B cell (primary cell): ENCODE measurements at regions of chr3 and their contacts with region 1.

Region 1: GRCh38 chr3:52056968-52057805 is 816 bp upstream of the DUSP7 start:
- DNase-seq: peak; percentile 99
- ATAC-seq: peak; percentile 85
- H3K4me3 ChIP-seq: peak overlapping the region; percentile 38 to 88 (median 78)
- H3K4me3 Mint-ChIP-seq: peak overlapping the region; percentile 95
- H3K27ac ChIP-seq: peak overlapping the region; percentile 79 to 83
- H3K27ac Mint-ChIP-seq: peak overlapping the region; percentile 94
- H3K4me1 ChIP-seq: peaks cover 43 to 57% of the 10 kb centered on the region in 2 donors
- H3K4me1 Mint-ChIP-seq: peaks cover 53% of the 10 kb centered on the region
- H3K27me3 ChIP-seq: no peaks in the 10 kb centered on the region
- H3K27me3 Mint-ChIP-seq: no peaks in the 10 kb centered on the region
- CTCF ChIP-seq: no peak

Region 2: GRCh38 chr3:51935886-51936755 is 121.1 kb before region 1 on chr3:
- CTCF ChIA-PET with region 1: no interaction called
- POLR2A ChIA-PET with region 1: no interaction called
- intact Hi-C with region 1: no loop called
- DNase-seq: no peak
- ATAC-seq: no peak
- H3K4me3 ChIP-seq: no peak overlapping the region
- H3K4me3 Mint-ChIP-seq: no peak overlapping the region
- H3K27ac ChIP-seq: no peak overlapping the region
- H3K27ac Mint-ChIP-seq: no peak overlapping the region
- H3K4me1 ChIP-seq: peaks cover 7 to 8% of the 10 kb centered on the region in 2 donors
- H3K4me1 Mint-ChIP-seq: peaks cover 19% of the 10 kb centered on the region
- H3K27me3 ChIP-seq: no peaks in the 10 kb centered on the region
- H3K27me3 Mint-ChIP-seq: no peaks in the 10 kb centered on the region
- CTCF ChIP-seq: no peak

Region 3: DNA sequence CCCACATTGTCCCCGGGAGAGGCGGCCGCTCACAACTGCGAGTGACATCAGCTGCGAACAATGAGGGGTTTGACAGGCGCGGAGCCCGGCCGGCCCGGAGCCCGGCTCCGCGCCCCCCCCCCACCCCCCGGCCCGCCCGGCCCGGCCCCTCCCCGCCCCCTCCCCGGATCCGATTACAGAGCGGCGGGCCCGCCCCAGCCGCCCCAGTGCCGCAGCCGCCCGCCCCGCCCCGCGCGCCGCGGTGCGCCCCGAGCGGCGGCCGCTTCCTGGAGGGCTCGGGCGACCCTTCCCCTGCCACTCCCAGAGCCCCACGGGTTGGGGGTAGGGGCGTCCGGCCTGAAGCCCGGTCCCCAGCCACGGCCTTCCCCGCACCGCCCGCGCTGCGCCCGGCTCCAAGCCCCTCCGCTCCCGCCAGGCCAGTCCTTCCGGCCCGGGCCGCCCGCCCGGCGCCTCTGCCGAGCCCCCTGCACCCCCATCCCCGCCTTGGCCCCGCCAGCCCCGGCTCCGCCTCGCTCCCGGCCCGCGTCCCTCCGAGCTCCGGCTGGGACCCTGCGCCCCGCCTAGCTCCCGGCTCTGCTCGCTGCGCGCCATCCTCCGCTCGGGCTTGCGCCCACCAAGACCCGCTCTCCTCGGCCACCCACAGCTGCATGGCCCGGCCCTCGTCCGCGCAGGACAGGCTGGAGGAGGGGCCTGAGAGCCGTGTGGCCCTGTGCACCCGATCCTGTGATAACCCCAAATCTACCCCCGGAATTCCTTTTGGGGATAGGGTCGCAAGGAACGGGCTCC is 89.6 kb before region 1 on chr3 and contains the start of gene PCBP4:
- CTCF ChIA-PET with region 1: no interaction called
- POLR2A ChIA-PET with region 1: no interaction called
- intact Hi-C with region 1: no loop called
- DNase-seq: peak; percentile 54
- ATAC-seq: peak; percentile 72
- H3K4me3 ChIP-seq: peak within 1 kb of the TSS in 4 of 5 experiments; percentile 37 to 74 (median 55)
- H3K4me3 Mint-ChIP-seq: peak within 1 kb of the TSS; percentile 88
- H3K27ac ChIP-seq: peak within 1 kb of the TSS in 1 of 2 donors; percentile 56
- H3K27ac Mint-ChIP-seq: peak within 1 kb of the TSS; percentile 83
- H3K4me1 ChIP-seq: peaks cover 6 to 20% of the 10 kb centered on the region in 2 donors
- H3K4me1 Mint-ChIP-seq: peaks cover 23% of the 10 kb centered on the region
- H3K27me3 ChIP-seq: no peaks in the 10 kb centered on the region
- H3K27me3 Mint-ChIP-seq: no peaks in the 10 kb centered on the region
- CTCF ChIP-seq: no peak
- total RNA-seq, gene PCBP4: 15.3 TPM in 2 replicates

Region 4: GRCh38 chr3:51982782-51983577 is 74.2 kb before region 1 on chr3 and contains the start of gene ACY1:
- CTCF ChIA-PET with region 1: no interaction called
- POLR2A ChIA-PET with region 1: no interaction called
- intact Hi-C with region 1: loop called (anchors 1 kb)
- DNase-seq: peak; percentile 72
- ATAC-seq: peak; percentile 79
- H3K4me3 ChIP-seq: peak within 1 kb of the TSS; percentile 47 to 68 (median 58)
- H3K4me3 Mint-ChIP-seq: peak within 1 kb of the TSS; percentile 92
- H3K27ac ChIP-seq: peak within 1 kb of the TSS; percentile 65 to 76
- H3K27ac Mint-ChIP-seq: peak within 1 kb of the TSS; percentile 93
- H3K4me1 ChIP-seq: peaks cover 10 to 19% of the 10 kb centered on the region in 2 donors
- H3K4me1 Mint-ChIP-seq: peaks cover 17% of the 10 kb centered on the region
- H3K27me3 ChIP-seq: no peaks in the 10 kb centered on the region
- H3K27me3 Mint-ChIP-seq: no peaks in the 10 kb centered on the region
- CTCF ChIP-seq: peak; percentile 46
- total RNA-seq, gene ACY1: 11.6 and 14.6 TPM in 2 replicates

Region 5: GRCh38 chr3:52001443-52001974 is 55.7 kb before region 1 on chr3:
- CTCF ChIA-PET with region 1: interaction called, 13 read pairs
- POLR2A ChIA-PET with region 1: interaction called, 3 read pairs
- intact Hi-C with region 1: loop called (anchors 1 kb)
- DNase-seq: peak; percentile 91
- ATAC-seq: peak; percentile 99
- H3K4me3 ChIP-seq: no peak overlapping the region
- H3K4me3 Mint-ChIP-seq: no peak overlapping the region
- H3K27ac ChIP-seq: no peak overlapping the region
- H3K27ac Mint-ChIP-seq: peak overlapping the region; percentile 37
- H3K4me1 ChIP-seq: peaks cover 6 to 13% of the 10 kb centered on the region in 2 donors
- H3K4me1 Mint-ChIP-seq: peaks cover 5% of the 10 kb centered on the region
- H3K27me3 ChIP-seq: no peaks in the 10 kb centered on the region
- H3K27me3 Mint-ChIP-seq: peaks cover 6% of the 10 kb centered on the region
- CTCF ChIP-seq: peak; percentile 90

Region 6: DNA sequence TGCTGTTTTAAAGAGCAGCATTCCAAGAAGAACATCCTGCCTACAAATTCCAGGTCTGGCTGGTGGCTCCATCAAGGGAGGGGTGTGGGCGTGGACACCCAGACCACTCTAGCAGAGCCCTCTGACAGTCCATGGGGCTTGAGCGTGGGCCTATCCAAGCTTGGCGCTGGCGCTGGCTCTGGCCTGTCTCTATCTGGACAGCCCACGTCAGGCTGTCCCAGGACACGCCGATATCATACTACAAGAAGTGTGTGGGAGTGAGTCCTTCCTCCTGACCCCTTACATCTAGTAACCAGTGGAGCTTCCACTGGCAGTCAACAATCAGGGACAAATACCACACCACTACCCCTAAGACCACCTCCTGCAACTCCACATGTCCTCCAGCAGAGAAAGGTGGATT is 16.3 kb after region 1 on chr3:
- CTCF ChIA-PET with region 1: no interaction called
- POLR2A ChIA-PET with region 1: no interaction called
- intact Hi-C with region 1: no loop called
- DNase-seq: no peak
- ATAC-seq: no peak
- H3K4me3 ChIP-seq: no peak overlapping the region
- H3K4me3 Mint-ChIP-seq: no peak overlapping the region
- H3K27ac ChIP-seq: no peak overlapping the region
- H3K27ac Mint-ChIP-seq: no peak overlapping the region
- H3K4me1 ChIP-seq: no peaks in the 10 kb centered on the region
- H3K4me1 Mint-ChIP-seq: no peaks in the 10 kb centered on the region
- H3K27me3 ChIP-seq: no peaks in the 10 kb centered on the region
- H3K27me3 Mint-ChIP-seq: no peaks in the 10 kb centered on the region
- CTCF ChIP-seq: no peak

Region 7: DNA sequence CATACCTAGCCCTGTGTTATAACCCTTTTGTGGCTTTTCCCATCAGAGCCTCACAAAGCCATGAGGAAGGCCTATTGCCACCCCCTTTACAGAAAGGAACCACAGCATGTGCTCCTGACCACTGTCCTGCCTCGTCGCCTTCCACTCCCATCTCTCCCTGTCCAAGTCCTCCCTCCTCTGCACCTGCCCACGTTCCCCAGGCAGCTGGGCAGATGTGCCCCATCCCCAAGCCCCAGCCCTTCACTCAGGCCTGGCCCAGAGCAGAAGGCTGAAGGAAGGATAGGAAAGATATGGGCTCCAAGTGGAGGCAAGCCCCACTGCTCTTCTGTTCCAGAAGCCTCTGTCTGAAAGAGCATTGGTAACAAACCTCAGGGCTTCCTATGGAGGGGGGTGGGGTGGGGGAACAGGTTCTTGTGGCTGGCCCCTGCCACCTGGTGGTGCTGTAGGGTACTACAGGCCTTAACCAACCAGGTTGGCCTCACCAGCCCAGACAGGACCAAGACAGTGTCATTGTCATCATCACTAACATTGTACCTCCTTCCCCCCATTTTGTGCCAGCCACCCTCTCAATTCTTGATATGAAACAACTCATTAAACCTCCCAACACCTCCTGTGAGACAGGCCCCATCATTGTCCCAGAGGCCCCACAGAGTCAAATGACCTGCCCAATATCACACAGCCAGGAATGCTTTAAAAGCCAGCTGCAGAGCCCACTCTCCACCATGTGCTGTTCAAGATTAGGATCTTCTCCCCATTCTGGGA is 87.0 kb after region 1 on chr3:
- CTCF ChIA-PET with region 1: interaction called, 31 read pairs
- POLR2A ChIA-PET with region 1: interaction called, 3 read pairs
- intact Hi-C with region 1: loop called (anchors 1 kb)
- DNase-seq: peak; percentile 89
- ATAC-seq: peak; percentile 99
- H3K4me3 ChIP-seq: no peak overlapping the region
- H3K4me3 Mint-ChIP-seq: no peak overlapping the region
- H3K27ac ChIP-seq: no peak overlapping the region
- H3K27ac Mint-ChIP-seq: no peak overlapping the region
- H3K4me1 ChIP-seq: peaks cover 4 to 5% of the 10 kb centered on the region in 2 donors
- H3K4me1 Mint-ChIP-seq: peaks cover 5% of the 10 kb centered on the region
- H3K27me3 ChIP-seq: no peaks in the 10 kb centered on the region
- H3K27me3 Mint-ChIP-seq: no peaks in the 10 kb centered on the region
- CTCF ChIP-seq: peak; percentile 93

Region 8: GRCh38 chr3:52220380-52221026 is 163.3 kb after region 1 on chr3:
- CTCF ChIA-PET with region 1: interaction called, 5 read pairs
- POLR2A ChIA-PET with region 1: interaction called, 4 read pairs
- intact Hi-C with region 1: loop called (anchors 10 kb)
- DNase-seq: peak; percentile 85
- ATAC-seq: peak; percentile 59
- H3K4me3 ChIP-seq: no peak overlapping the region
- H3K4me3 Mint-ChIP-seq: peak overlapping the region; percentile 66
- H3K27ac ChIP-seq: no peak overlapping the region
- H3K27ac Mint-ChIP-seq: peak overlapping the region; percentile 86
- H3K4me1 ChIP-seq: peaks cover 64 to 90% of the 10 kb centered on the region in 2 donors
- H3K4me1 Mint-ChIP-seq: peaks cover 78% of the 10 kb centered on the region
- H3K27me3 ChIP-seq: no peaks in the 10 kb centered on the region
- H3K27me3 Mint-ChIP-seq: no peaks in the 10 kb centered on the region
- CTCF ChIP-seq: peak; percentile 83

Region 9: GRCh38 chr3:52436500-52437149 is 379.4 kb after region 1 on chr3:
- CTCF ChIA-PET with region 1: no interaction called
- POLR2A ChIA-PET with region 1: no interaction called
- intact Hi-C with region 1: no loop called
- DNase-seq: no peak
- ATAC-seq: no peak
- H3K4me3 ChIP-seq: no peak overlapping the region
- H3K4me3 Mint-ChIP-seq: no peak overlapping the region
- H3K27ac ChIP-seq: no peak overlapping the region
- H3K27ac Mint-ChIP-seq: no peak overlapping the region
- H3K4me1 ChIP-seq: no peaks in the 10 kb centered on the region
- H3K4me1 Mint-ChIP-seq: no peaks in the 10 kb centered on the region
- H3K27me3 ChIP-seq: no peaks in the 10 kb centered on the region
- H3K27me3 Mint-ChIP-seq: no peaks in the 10 kb centered on the region
- CTCF ChIP-seq: no peak

Region 10: DNA sequence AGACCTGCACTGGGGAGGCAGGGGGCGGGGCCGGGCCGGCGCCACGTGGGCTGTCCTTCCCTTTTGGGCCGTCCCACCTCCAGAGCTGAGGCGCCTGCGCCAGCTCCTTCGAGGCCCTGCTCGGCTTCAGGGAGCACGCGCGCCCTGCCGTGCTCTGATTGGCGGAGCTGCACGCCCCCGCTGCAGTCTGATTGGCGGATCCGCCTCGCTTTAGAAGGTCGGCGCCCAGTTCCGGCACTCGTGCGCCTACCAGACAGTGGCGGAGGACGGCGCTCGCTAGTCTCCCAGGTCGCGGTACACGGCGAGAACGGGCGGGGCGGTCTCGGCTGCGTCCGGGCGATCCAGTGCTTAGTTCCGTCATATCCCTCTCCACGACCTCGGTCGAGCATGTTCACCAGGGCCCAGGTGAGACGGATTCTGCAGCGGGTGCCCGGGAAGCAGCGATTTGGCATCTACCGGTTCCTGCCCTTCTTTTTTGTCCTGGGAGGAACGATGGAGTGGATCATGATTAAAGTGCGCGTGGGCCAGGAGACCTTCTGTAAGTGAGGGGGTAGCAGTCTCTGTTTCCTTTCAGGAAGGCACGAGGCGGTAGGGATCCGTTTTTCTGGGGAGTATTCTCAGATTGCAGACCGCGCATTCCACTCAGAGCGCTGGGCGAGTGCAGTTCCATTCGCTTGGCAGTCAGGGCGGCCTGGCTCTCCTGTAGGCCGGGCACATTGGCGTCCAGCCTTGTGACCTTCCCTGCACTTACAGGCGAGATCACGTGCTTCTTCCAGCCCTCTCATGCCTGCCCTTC is 479.4 kb after region 1 on chr3 and contains the start of gene UQCC5:
- CTCF ChIA-PET with region 1: no interaction called
- POLR2A ChIA-PET with region 1: no interaction called
- intact Hi-C with region 1: loop called (anchors 10 kb)
- DNase-seq: peak; percentile 99
- ATAC-seq: peak; percentile 84
- H3K4me3 ChIP-seq: peak within 1 kb of the TSS; percentile 90 to 99 (median 95)
- H3K4me3 Mint-ChIP-seq: peak within 1 kb of the TSS; percentile 99
- H3K27ac ChIP-seq: peak within 1 kb of the TSS; percentile 84 to 93
- H3K27ac Mint-ChIP-seq: peak within 1 kb of the TSS; percentile 99
- H3K4me1 ChIP-seq: peaks cover 34 to 51% of the 10 kb centered on the region in 2 donors
- H3K4me1 Mint-ChIP-seq: peaks cover 46% of the 10 kb centered on the region
- H3K27me3 ChIP-seq: peaks cover 0 to 13% (median 0%) of the 10 kb centered on the region in 4 experiments
- H3K27me3 Mint-ChIP-seq: no peaks in the 10 kb centered on the region
- CTCF ChIP-seq: no peak
- total RNA-seq, gene UQCC5: 10.3 and 16.4 TPM in 2 replicates